CD8-positive, alpha-beta memory T cell (primary cell): ENCODE measurements at regions of chr22 and their contacts with region 1.

Region 1: GRCh38 chr22:46803031-46803880 is 40.8 kb downstream of the TBC1D22A start:
- DNase-seq: peak; percentile 60 to 79 (median 67)
- H3K4me3 ChIP-seq: no peak overlapping the region
- H3K4me3 Mint-ChIP-seq: peak overlapping the region in 5 of 7 donors; percentile 24 to 55 (median 51)
- H3K27ac ChIP-seq: no peak overlapping the region
- H3K27ac Mint-ChIP-seq: peak overlapping the region; percentile 53 to 96 (median 90)
- H3K4me1 ChIP-seq: peaks cover 15% of the 10 kb centered on the region
- H3K4me1 Mint-ChIP-seq: peaks cover 35 to 71% (median 59%) of the 10 kb centered on the region in 3 donors
- H3K27me3 ChIP-seq: no peaks in the 10 kb centered on the region
- H3K27me3 Mint-ChIP-seq: peaks cover 0 to 2% of the 10 kb centered on the region in 2 donors

Region 2: GRCh38 chr22:46563381-46564083 is 239.7 kb before region 1 on chr22:
- CTCF ChIA-PET with region 1: interaction called, 23 read pairs
- POLR2A ChIA-PET with region 1: no interaction called
- DNase-seq: peak; percentile 49 to 78 (median 63)
- H3K4me3 ChIP-seq: no peak overlapping the region
- H3K4me3 Mint-ChIP-seq: peak overlapping the region in 3 of 7 donors; percentile 26 to 31 (median 26)
- H3K27ac ChIP-seq: no peak overlapping the region
- H3K27ac Mint-ChIP-seq: peak overlapping the region in 3 of 8 donors; percentile 32 to 57 (median 40)
- H3K4me1 ChIP-seq: no peaks in the 10 kb centered on the region
- H3K4me1 Mint-ChIP-seq: peaks cover 0 to 2% (median 0%) of the 10 kb centered on the region in 3 donors
- H3K27me3 ChIP-seq: no peaks in the 10 kb centered on the region
- H3K27me3 Mint-ChIP-seq: peaks cover 0 to 3% of the 10 kb centered on the region in 2 donors

Region 3: GRCh38 chr22:46726066-46726985 is 76.9 kb before region 1 on chr22:
- CTCF ChIA-PET with region 1: interaction called, 10 read pairs
- POLR2A ChIA-PET with region 1: no interaction called
- DNase-seq: no peak
- H3K4me3 ChIP-seq: no peak overlapping the region
- H3K4me3 Mint-ChIP-seq: peak overlapping the region in 3 of 7 donors; percentile 27 to 67 (median 53)
- H3K27ac ChIP-seq: no peak overlapping the region
- H3K27ac Mint-ChIP-seq: peak overlapping the region in 6 of 8 donors; percentile 68 to 93 (median 82)
- H3K4me1 ChIP-seq: peaks cover 14% of the 10 kb centered on the region
- H3K4me1 Mint-ChIP-seq: peaks cover 40 to 72% (median 65%) of the 10 kb centered on the region in 3 donors
- H3K27me3 ChIP-seq: no peaks in the 10 kb centered on the region
- H3K27me3 Mint-ChIP-seq: no peaks in the 10 kb centered on the region

Region 4: GRCh38 chr22:46748908-46749675 is 54.2 kb before region 1 on chr22:
- CTCF ChIA-PET with region 1: interaction called, 13 read pairs
- POLR2A ChIA-PET with region 1: no interaction called
- DNase-seq: peak; percentile 45 to 83 (median 59)
- H3K4me3 ChIP-seq: peak overlapping the region; percentile 52
- H3K4me3 Mint-ChIP-seq: peak overlapping the region; percentile 32 to 86 (median 80)
- H3K27ac ChIP-seq: peak overlapping the region; percentile 36
- H3K27ac Mint-ChIP-seq: peak overlapping the region; percentile 94 to 98 (median 96)
- H3K4me1 ChIP-seq: peaks cover 27% of the 10 kb centered on the region
- H3K4me1 Mint-ChIP-seq: peaks cover 21 to 33% (median 26%) of the 10 kb centered on the region in 3 donors
- H3K27me3 ChIP-seq: no peaks in the 10 kb centered on the region
- H3K27me3 Mint-ChIP-seq: no peaks in the 10 kb centered on the region

Region 5: GRCh38 chr22:46762238-46763050 is 40.8 kb before region 1 on chr22 and contains the start of gene TBC1D22A:
- CTCF ChIA-PET with region 1: interaction called, 133 read pairs
- POLR2A ChIA-PET with region 1: interaction called, 8 read pairs
- DNase-seq: peak; percentile 88 to 95 (median 92)
- H3K4me3 ChIP-seq: peak within 1 kb of the TSS; percentile 98
- H3K4me3 Mint-ChIP-seq: peak within 1 kb of the TSS; percentile 96 to 100 (median 99)
- H3K27ac ChIP-seq: peak within 1 kb of the TSS; percentile 99
- H3K27ac Mint-ChIP-seq: peak within 1 kb of the TSS; percentile 99 to 100 (median 100)
- H3K4me1 ChIP-seq: peaks cover 43% of the 10 kb centered on the region
- H3K4me1 Mint-ChIP-seq: peaks cover 48 to 73% (median 65%) of the 10 kb centered on the region in 3 donors
- H3K27me3 ChIP-seq: no peaks in the 10 kb centered on the region
- H3K27me3 Mint-ChIP-seq: no peaks in the 10 kb centered on the region
- total RNA-seq, gene TBC1D22A: 34.0 to 34.8 TPM

Region 6: DNA sequence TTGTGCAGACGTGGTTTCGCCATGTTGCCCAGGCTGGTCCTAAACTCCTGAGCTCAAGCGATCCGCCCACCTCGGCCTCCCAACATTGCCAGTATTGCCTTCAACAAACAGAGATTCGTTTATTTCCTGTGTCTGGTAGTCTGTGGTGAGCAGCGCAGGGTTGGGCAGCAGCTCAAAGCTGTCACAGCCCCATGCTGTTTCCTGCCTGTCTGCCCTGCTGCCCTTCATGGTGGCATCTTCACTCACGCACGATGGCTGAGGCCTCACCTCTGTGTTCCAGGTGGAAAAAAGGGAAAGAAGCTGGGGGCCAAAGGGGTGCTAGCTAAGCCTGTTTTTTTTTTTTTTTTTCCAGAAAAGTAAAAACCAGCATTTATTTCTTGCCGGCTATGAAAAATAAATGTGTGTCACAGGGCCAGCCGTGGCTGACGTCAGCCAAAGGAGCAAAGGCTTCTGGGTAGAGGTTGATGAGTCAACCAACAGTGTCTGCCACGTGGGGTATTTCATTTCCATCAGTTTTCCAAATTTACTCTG is 12.0 kb before region 1 on chr22:
- CTCF ChIA-PET with region 1: interaction called, 43 read pairs
- POLR2A ChIA-PET with region 1: no interaction called
- DNase-seq: peak; percentile 76 to 92 (median 89)
- H3K4me3 ChIP-seq: peak overlapping the region; percentile 33
- H3K4me3 Mint-ChIP-seq: peak overlapping the region; percentile 81 to 90 (median 87)
- H3K27ac ChIP-seq: peak overlapping the region; percentile 96
- H3K27ac Mint-ChIP-seq: peak overlapping the region; percentile 99 to 100 (median 100)
- H3K4me1 ChIP-seq: peaks cover 42% of the 10 kb centered on the region
- H3K4me1 Mint-ChIP-seq: peaks cover 46 to 65% (median 53%) of the 10 kb centered on the region in 3 donors
- H3K27me3 ChIP-seq: no peaks in the 10 kb centered on the region
- H3K27me3 Mint-ChIP-seq: no peaks in the 10 kb centered on the region

Region 7: DNA sequence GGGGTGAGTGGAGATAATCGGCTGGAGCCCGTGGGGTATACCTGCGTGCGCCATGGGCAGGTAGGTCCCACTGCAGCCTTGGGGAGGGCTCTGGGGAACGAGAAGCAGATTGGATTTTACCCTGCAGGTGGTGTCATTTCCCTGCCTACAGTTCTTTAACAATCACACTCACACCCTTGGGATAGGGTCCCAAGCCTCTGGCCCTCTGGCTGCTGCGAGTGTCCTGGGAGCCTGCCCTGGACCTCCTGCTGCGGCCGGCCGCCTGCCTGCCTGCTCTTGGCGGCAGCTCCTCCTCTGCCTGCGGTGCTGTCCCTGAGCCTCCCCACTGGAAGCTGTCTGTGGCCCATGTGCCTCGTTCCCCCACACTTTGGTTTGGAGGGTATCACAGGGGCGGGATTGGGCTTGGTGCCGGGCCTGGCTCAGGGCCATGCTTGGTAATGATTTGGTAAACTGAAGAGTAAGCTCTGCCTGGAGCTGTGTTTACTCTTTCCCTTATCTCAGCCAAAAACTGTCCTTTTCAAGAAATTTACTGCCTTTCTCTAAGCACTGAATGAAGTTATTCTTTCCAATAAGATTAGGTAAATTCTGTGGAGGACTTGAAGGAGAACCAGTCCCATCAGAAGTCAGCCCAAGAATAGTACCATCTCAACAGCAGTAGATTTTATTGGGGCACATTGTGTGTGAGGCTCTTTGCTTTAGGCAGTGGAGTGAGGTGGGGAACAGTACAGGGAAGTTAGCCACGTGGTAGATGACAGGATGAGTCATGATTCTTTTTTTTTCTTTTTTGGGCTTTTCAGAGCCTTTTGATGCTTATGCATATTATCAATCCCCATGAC is 12.9 kb after region 1 on chr22:
- CTCF ChIA-PET with region 1: interaction called, 11 read pairs
- POLR2A ChIA-PET with region 1: interaction called, 3 read pairs
- DNase-seq: no peak
- H3K4me3 ChIP-seq: no peak overlapping the region
- H3K4me3 Mint-ChIP-seq: no peak overlapping the region
- H3K27ac ChIP-seq: no peak overlapping the region
- H3K27ac Mint-ChIP-seq: peak overlapping the region in 3 of 8 donors; percentile 11 to 39 (median 11)
- H3K4me1 ChIP-seq: peaks cover 6% of the 10 kb centered on the region
- H3K4me1 Mint-ChIP-seq: peaks cover 67 to 87% (median 78%) of the 10 kb centered on the region in 3 donors
- H3K27me3 ChIP-seq: no peaks in the 10 kb centered on the region
- H3K27me3 Mint-ChIP-seq: no peaks in the 10 kb centered on the region

Region 8: DNA sequence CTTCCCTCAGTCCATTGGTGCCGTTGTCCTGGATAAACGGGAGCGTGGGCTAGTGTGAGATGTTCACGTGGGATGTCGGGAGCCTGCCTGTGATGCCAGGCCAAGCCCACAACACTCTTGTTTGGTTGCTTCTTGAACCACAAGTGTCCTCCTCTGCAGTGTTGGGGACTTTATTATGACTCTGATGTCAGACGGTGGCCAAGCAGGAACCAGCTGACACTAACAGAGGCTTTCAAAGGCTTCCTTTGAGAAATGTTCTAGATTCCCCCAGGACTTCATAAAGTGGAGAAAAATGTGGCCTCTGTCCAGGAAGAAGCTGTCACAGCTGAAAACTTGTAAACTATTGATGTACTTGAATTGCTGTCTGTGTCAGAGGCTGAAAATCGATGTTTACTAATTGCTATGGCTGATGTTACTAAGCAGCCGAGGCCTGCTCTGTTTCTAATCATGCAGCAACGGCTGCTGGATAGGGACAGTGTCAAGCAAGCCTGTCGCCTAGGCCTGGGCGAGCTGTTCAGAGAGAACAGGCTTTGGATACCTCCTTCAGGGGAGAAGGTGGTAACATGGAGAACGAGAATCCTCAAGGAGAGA is 90.9 kb after region 1 on chr22:
- CTCF ChIA-PET with region 1: no interaction called
- POLR2A ChIA-PET with region 1: no interaction called
- DNase-seq: no peak
- H3K4me3 ChIP-seq: no peak overlapping the region
- H3K4me3 Mint-ChIP-seq: no peak overlapping the region
- H3K27ac ChIP-seq: no peak overlapping the region
- H3K27ac Mint-ChIP-seq: peak overlapping the region in 3 of 8 donors; percentile 18 to 63 (median 27)
- H3K4me1 ChIP-seq: no peaks in the 10 kb centered on the region
- H3K4me1 Mint-ChIP-seq: peaks cover 17 to 30% (median 26%) of the 10 kb centered on the region in 3 donors
- H3K27me3 ChIP-seq: no peaks in the 10 kb centered on the region
- H3K27me3 Mint-ChIP-seq: no peaks in the 10 kb centered on the region

Region 9: GRCh38 chr22:46971141-46972091 is 168.2 kb after region 1 on chr22:
- CTCF ChIA-PET with region 1: no interaction called
- POLR2A ChIA-PET with region 1: no interaction called
- DNase-seq: peak in 1 of 5 donors; percentile 10
- H3K4me3 ChIP-seq: no peak overlapping the region
- H3K4me3 Mint-ChIP-seq: no peak overlapping the region
- H3K27ac ChIP-seq: no peak overlapping the region
- H3K27ac Mint-ChIP-seq: no peak overlapping the region
- H3K4me1 ChIP-seq: no peaks in the 10 kb centered on the region
- H3K4me1 Mint-ChIP-seq: peaks cover 23 to 41% (median 38%) of the 10 kb centered on the region in 3 donors
- H3K27me3 ChIP-seq: no peaks in the 10 kb centered on the region
- H3K27me3 Mint-ChIP-seq: no peaks in the 10 kb centered on the region